ENCODE measurements at regions of chr5 and their contacts with region 1.

Region 1: GRCh38 chr5:13464532-13465193 is 479.8 kb downstream of the DNAH5 start:
- DNase-seq: no peak
- H3K4me3 ChIP-seq: no peak overlapping the region
- H3K27ac ChIP-seq: no peak overlapping the region
- H3K27me3 ChIP-seq: peaks cover 0 to 5% (median 0%) of the 10 kb centered on the region in 45 donors
- CTCF ChIP-seq: no peak

Region 2: GRCh38 chr5:12125895-12126294 is 1338.8 kb before region 1 on chr5:
- intact Hi-C with region 1: loop called in 1 of 2 experiments (anchors 10 kb)
- DNase-seq: no peak
- H3K4me3 ChIP-seq: no peak overlapping the region
- H3K27ac ChIP-seq: no peak overlapping the region
- H3K27me3 ChIP-seq: no peaks in the 10 kb centered on the region
- CTCF ChIP-seq: no peak

Region 3: DNA sequence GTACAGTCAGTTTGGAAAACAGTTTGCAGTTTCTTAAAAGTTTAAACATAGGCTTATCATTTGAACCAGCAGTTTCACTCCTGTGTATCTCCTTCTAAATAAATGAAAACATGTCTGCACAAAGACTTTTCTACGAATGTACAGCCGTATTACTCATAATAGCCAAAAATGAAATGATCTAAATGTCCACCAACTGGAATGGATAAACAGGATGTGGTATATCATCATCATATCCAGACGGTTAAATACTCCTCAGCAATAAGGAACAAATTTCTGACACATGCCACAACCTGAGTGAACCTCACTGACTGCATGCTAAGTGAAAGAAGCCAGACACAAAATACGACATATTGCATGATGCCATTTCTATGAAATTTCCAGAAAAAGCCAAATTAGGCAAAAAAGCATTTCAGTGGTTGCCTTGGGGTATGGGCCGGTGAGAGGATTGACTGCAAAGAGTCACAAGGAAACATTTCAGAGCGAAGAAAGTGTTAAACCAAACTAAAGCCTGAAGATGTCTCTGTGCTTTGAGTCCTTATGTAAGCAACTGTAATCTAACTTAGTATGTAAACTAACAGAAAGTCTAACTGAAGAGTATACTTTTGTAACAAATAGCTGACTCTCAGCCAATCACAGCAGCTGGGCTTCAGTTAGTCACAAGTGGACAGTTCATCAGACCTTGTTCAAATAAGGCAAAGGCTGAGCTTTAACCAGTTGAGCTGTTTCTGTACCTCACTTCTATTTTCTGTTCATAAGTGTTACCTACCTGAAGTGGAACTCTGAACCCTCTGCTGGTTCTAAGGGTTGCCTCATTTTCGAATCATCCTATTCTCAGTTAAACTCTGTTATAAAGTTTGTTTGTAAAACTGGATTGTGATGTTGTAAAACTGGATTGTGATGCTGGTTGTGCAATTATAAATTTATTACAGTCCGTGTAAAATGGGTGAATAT is 743.7 kb after region 1 on chr5:
- intact Hi-C with region 1: no loop called
- DNase-seq: no peak
- H3K4me3 ChIP-seq: no peak overlapping the region
- H3K27ac ChIP-seq: no peak overlapping the region
- H3K27me3 ChIP-seq: no peaks in the 10 kb centered on the region
- CTCF ChIP-seq: no peak

Measured in dorsolateral prefrontal cortex (tissue), 120 donors.